IMR-90 (cell line): ENCODE measurements at regions of chr12 and their contacts with region 1.

Region 1: DNA sequence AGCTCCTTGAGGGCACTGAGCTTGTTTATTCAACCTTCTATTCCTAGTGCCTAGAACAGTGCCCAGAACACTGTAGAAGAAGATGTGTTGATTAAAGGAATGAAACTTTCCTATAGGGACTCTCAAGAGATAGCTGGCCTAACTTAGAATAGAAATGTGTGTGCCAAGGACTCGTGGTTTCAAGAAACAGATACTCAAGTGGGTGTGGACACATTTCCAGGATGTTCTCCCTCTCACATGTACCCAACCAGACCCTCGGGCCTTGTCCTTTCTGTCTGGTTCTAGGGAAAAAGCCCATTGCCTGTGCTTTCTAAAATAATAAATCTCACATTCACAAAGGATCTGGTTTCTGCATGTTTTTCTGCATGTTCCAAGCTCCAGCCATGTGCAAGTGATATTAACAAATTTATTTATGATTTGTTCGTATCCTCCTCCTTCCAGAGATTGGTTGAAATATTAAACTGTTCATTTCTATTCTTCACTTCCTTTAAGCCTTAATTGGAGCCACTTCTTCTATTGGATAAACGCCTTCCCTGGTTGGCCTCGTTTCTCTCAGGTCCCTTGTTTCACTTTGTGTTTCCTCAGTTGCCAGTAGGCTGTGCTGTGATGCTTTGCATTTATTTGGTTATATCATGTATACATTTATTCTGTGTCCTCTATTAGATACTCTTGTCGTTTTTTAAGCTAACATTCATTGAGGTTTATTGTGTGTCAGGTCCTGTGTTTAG is 89.8 kb downstream of the CRADD start:
- DNase-seq: peak; percentile 76
- ATAC-seq: peak; percentile 92
- H3K4me3 ChIP-seq: no peak overlapping the region
- H3K27ac ChIP-seq: no peak overlapping the region
- H3K4me1 ChIP-seq: peaks cover 2% of the 10 kb centered on the region; the same call in 1 of the 2 replicates
- H3K27me3 ChIP-seq: no peaks in the 10 kb centered on the region
- CTCF ChIP-seq: peak; percentile 79
- POLR2A ChIP-seq: no peak
- RAD21 ChIP-seq: peak; percentile 90

Region 2: DNA sequence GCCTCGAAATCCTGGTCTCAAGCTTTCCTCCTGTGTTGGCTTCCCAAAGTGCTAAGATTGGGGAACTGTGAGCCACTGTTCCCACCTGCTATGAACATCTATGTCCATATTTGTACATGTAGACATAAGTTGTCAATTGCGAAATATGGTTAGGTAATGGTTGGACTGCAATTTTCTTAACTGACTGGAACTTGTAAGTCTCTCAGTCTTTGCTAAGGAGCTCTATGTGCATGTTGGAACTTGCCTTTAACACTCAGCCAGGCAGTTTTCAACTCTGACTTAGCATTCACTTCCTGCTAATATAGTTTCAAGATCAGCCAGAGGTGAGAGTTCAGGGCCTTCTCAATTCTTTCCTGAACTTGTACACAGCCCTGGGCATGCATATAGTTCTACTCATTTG is 793.4 kb before region 1 on chr12:
- CTCF ChIA-PET with region 1: no interaction called
- POLR2A ChIA-PET with region 1: interaction called, 20 read pairs
- dilution Hi-C with region 1: no loop called
- in situ Hi-C with region 1: no loop called
- intact Hi-C with region 1: no loop called
- DNase-seq: peak; percentile 90
- ATAC-seq: peak; percentile 19; the same call in 1 of the 2 replicates
- H3K4me3 ChIP-seq: no peak overlapping the region
- H3K27ac ChIP-seq: peak overlapping the region; percentile 81; the same call in 1 of the 2 replicates
- H3K4me1 ChIP-seq: peaks cover 8% of the 10 kb centered on the region
- H3K27me3 ChIP-seq: no peaks in the 10 kb centered on the region
- CTCF ChIP-seq: no peak
- POLR2A ChIP-seq: no peak
- RAD21 ChIP-seq: no peak

Region 3: DNA sequence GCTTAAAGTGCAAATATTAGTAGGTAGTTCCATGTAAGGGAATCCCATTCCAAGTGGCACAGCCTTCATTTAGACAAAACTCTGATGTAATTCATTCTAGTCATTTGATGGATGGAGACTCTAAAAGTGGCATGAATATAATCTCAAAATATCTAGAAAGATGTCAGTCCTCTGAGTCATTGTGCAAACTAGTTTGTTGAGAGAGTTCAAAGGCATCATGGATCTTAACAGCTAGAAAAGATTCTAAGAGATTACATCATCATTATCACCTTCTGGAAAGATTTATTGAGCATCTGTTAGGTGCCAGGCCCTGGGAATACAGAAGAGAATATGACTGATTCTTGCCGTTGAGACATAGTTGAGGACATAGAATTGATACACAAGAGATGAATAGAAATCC is 59.1 kb before region 1 on chr12:
- CTCF ChIA-PET with region 1: no interaction called
- POLR2A ChIA-PET with region 1: no interaction called
- dilution Hi-C with region 1: no loop called
- in situ Hi-C with region 1: no loop called
- intact Hi-C with region 1: no loop called
- DNase-seq: peak; percentile 34
- ATAC-seq: no peak; the same call in 1 of the 2 replicates
- H3K4me3 ChIP-seq: no peak overlapping the region
- H3K27ac ChIP-seq: no peak overlapping the region
- H3K4me1 ChIP-seq: no peaks in the 10 kb centered on the region; the same call in 1 of the 2 replicates
- H3K27me3 ChIP-seq: no peaks in the 10 kb centered on the region
- CTCF ChIP-seq: no peak
- POLR2A ChIP-seq: no peak
- RAD21 ChIP-seq: no peak

Region 4: DNA sequence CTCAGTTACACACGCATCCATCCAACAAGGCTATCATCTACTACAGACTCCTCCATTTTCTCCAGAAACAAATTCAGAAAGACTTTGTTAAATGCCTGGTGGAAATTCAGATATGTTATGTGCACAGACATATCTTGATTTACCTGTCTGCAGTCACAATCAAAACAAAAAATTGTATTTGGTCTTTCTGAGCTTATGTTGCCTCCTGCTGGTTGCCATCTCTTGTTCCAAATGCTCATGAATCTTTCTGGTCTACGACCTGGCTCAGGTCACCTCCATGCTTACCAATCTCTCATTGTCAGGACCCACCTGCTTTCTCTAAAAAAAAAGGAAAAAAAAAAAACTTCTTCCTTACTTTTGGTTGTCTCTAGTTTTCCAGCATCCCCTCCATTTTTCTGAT is 212.2 kb after region 1 on chr12:
- CTCF ChIA-PET with region 1: interaction called, 5 read pairs
- POLR2A ChIA-PET with region 1: no interaction called
- dilution Hi-C with region 1: no loop called
- in situ Hi-C with region 1: no loop called
- intact Hi-C with region 1: loop called (anchors 5 kb)
- DNase-seq: peak; percentile 38
- ATAC-seq: no peak
- H3K4me3 ChIP-seq: no peak overlapping the region
- H3K27ac ChIP-seq: no peak overlapping the region
- H3K4me1 ChIP-seq: peaks cover 15% of the 10 kb centered on the region
- H3K27me3 ChIP-seq: no peaks in the 10 kb centered on the region
- CTCF ChIP-seq: peak; percentile 54
- POLR2A ChIP-seq: no peak
- RAD21 ChIP-seq: peak; percentile 66

Region 5: DNA sequence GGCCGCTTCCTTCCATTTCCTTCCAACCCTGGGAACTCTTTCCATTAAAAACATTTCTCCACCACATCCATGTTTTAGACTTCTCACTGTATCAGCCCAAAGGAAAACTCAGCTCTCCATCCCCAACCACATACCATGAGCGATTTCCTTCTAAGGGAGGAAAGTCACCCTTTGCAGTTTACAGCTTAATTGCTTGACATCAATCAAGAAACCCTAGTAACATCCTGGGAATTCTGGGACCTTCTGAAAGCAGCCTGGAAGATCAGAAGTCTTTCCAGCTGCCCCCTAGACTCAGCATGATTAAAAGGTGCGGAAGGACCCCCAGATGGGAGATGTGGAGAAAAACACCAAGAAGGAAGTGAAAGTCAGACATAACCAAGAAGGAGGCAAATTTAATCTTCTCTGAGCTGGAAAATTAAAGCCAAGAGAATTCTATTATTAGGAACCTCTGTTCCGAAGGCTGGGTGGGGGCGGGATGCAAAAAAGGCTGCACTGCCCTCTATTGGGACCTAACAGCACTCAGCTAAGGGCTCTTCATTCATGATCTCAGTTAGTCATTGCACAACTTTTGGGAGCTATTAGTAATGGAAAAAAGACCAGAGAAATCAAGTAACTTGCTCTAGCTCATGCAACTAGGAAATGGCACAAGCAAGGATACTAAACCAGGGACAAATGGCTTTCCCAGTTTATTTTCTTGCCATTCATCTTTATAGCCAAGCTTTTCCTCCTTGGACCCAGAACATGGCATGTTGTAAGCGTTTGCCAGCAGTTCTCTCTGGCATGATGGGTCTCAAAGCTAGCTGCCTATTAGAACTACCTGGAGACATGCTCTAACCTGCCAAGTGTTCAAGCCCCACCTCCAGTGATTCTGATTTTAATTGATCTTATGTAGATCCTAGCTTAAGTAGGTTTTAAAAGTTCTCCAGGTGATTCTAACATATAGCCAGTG is 308.3 kb after region 1 on chr12:
- CTCF ChIA-PET with region 1: interaction called, 12 read pairs
- POLR2A ChIA-PET with region 1: no interaction called
- dilution Hi-C with region 1: no loop called
- in situ Hi-C with region 1: no loop called
- intact Hi-C with region 1: loop called (anchors 1 kb)
- DNase-seq: peak; percentile 89
- ATAC-seq: peak; percentile 97
- H3K4me3 ChIP-seq: no peak overlapping the region
- H3K27ac ChIP-seq: no peak overlapping the region
- H3K4me1 ChIP-seq: peaks cover 4% of the 10 kb centered on the region; the same call in 1 of the 2 replicates
- H3K27me3 ChIP-seq: no peaks in the 10 kb centered on the region
- CTCF ChIP-seq: peak; percentile 78
- POLR2A ChIP-seq: no peak
- RAD21 ChIP-seq: peak; percentile 67